Activated naive CD4-positive, alpha-beta T cell treated with anti-CD3 and anti-CD28 coated beads, Interleukin-2, amount 10 ng/mL, durations not matched to agents 7 days and 5 days (primary cell): ENCODE measurements at regions of chr3 and their contacts with region 1.

Region 1: DNA sequence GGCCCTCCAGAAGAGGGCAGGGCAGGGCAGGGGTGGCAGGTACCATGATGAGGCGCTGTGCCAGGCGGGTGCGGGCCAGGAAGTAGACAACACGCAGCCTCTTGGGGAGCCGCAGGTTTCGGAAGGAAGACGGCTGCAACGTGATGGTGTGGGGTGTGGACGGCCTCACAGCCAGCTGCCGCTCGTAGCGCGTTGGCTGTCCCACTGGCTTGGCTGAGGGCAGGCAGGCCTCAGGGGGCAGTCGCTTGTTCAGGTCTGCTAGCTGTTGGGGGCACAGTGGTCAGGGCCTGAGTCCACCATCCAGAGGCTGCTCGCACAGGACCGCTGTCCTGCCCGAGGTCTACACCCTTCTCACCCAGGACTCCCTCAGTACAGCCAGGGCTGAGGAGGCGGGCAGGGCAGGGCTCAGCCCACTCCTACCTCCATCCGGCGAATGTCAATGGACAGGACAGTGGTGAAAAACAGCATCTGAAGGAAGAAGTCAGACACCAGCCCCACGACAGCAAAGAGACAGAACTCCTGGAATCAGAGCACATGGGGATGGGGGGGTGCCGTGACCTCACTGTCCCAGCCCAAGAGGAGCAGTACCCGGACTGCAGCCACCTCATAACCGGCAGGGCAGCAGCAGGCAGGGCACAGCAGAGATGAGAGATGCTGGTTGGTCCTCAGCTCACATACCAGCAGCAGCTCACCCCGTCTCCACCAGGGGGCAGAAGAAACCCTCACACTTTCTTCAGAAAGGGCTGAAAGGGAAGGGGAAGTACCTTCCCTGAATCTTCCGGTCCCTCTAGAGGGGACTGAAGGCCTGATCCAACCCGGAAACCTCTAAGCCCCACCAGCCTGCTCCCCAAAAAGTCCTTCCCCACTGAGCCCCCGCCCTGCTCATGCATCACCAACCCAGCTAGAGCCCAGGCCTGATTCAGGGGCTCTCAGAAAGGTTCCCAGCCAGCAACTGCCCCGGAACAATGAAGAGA is 40.0 kb downstream of the PTPN23 start:
- DNase-seq: peak; percentile 95
- H3K4me3 Mint-ChIP-seq: peak overlapping the region; percentile 60
- H3K27ac Mint-ChIP-seq: peak overlapping the region; percentile 98
- H3K4me1 Mint-ChIP-seq: peaks cover 8% of the 10 kb centered on the region
- H3K27me3 Mint-ChIP-seq: no peaks in the 10 kb centered on the region

Region 2: GRCh38 chr3:47475570-47476329 is 55.0 kb after region 1 on chr3 and contains the start of gene SCAP:
- CTCF ChIA-PET with region 1: interaction called, 40 read pairs
- DNase-seq: peak; percentile 97
- H3K4me3 Mint-ChIP-seq: peak within 1 kb of the TSS; percentile 94
- H3K27ac Mint-ChIP-seq: peak within 1 kb of the TSS; percentile 89
- H3K4me1 Mint-ChIP-seq: peaks cover 31% of the 10 kb centered on the region
- H3K27me3 Mint-ChIP-seq: no peaks in the 10 kb centered on the region